ENCODE measurements at regions of chr2 and their contacts with region 1.

Region 1: DNA sequence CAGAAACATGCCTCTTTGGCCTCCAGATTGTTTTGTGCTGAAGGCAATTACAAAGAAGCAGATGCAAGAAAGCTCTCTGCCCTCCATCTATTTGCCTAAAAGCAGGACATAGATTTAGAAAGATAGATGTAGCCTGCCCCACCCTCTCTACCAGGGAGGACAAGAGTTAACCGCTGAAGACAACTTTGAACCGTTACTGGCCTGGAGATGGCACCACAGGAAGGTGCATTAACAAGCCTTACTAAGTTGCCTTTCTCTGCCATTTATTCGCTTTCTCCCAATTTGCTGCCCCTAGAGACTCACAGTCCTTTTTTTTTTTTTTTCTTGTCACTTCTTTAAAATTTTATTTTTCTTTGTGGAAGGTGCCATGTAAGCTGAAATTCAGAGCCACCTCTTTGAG is 28.8 kb upstream of the RMDN2 start:
- DNase-seq: peak in 1 of 4 experiments; percentile 18
- ATAC-seq: peak; percentile 57; the same call in 2 of the 3 replicates
- H3K4me3 ChIP-seq: no peak overlapping the region
- H3K27ac ChIP-seq: no peak overlapping the region
- H3K4me1 ChIP-seq: no peaks in the 10 kb centered on the region
- H3K27me3 ChIP-seq: peaks cover 2 to 12% of the 10 kb centered on the region in 2 experiments; a peak in 2 of 5 replicates
- CTCF ChIP-seq: peak; percentile 9 to 40 (median 25); a peak in 2 of 6 replicates
- EP300 ChIP-seq: no peak
- POLR2A ChIP-seq: no peak
- RAD21 ChIP-seq: peak in 1 of 2 experiments; percentile 64; a peak in 2 of 4 replicates

Region 2: DNA sequence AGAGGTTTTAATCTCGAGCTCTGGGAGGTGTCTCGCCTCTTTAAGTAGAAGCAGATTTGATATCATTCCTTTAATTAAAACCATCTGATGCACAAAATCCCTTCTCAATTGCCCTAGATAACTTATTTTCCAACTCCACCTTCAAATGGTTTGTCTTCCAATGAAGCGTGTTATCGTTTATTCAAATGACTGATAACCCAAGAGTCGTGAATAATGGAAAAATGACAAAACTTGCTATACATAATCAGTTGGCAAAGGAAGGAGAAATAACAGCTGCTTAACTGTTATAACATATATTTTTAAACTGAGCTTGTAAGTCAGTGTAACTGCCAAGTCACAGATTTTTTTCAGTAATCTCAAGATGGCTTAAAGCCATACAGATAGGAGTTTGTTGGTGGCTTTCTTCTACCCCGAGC is 407.3 kb before region 1 on chr2:
- CTCF ChIA-PET with region 1: no interaction called
- POLR2A ChIA-PET with region 1: no interaction called
- in situ Hi-C with region 1: no loop called
- intact Hi-C with region 1: no loop called
- DNase-seq: no peak
- ATAC-seq: no peak
- H3K4me3 ChIP-seq: no peak overlapping the region
- H3K27ac ChIP-seq: no peak overlapping the region
- H3K4me1 ChIP-seq: no peaks in the 10 kb centered on the region
- H3K27me3 ChIP-seq: no peaks in the 10 kb centered on the region
- CTCF ChIP-seq: no peak
- EP300 ChIP-seq: no peak
- POLR2A ChIP-seq: no peak
- RAD21 ChIP-seq: no peak

Region 3: GRCh38 chr2:37912616-37913015 is 16.3 kb after region 1 on chr2:
- CTCF ChIA-PET with region 1: no interaction called
- POLR2A ChIA-PET with region 1: no interaction called
- in situ Hi-C with region 1: no loop called
- intact Hi-C with region 1: no loop called
- DNase-seq: no peak
- ATAC-seq: no peak
- H3K4me3 ChIP-seq: no peak overlapping the region
- H3K27ac ChIP-seq: no peak overlapping the region
- H3K4me1 ChIP-seq: no peaks in the 10 kb centered on the region
- H3K27me3 ChIP-seq: peaks cover 2 to 5% of the 10 kb centered on the region in 2 experiments; a peak in 3 of 5 replicates
- CTCF ChIP-seq: no peak
- EP300 ChIP-seq: no peak
- POLR2A ChIP-seq: no peak
- RAD21 ChIP-seq: no peak

Region 4: GRCh38 chr2:37973615-37974353 is 77.5 kb after region 1 on chr2:
- CTCF ChIA-PET with region 1: no interaction called
- POLR2A ChIA-PET with region 1: no interaction called
- in situ Hi-C with region 1: no loop called
- intact Hi-C with region 1: loop called (anchors 5 kb)
- DNase-seq: no peak
- ATAC-seq: no peak
- H3K4me3 ChIP-seq: no peak overlapping the region
- H3K27ac ChIP-seq: no peak overlapping the region
- H3K4me1 ChIP-seq: no peaks in the 10 kb centered on the region
- H3K27me3 ChIP-seq: no peaks in the 10 kb centered on the region; a peak in 2 of 5 replicates
- CTCF ChIP-seq: no peak
- EP300 ChIP-seq: no peak
- POLR2A ChIP-seq: no peak
- RAD21 ChIP-seq: no peak

Region 5: GRCh38 chr2:38115216-38116032 is 219.1 kb after region 1 on chr2:
- CTCF ChIA-PET with region 1: no interaction called
- POLR2A ChIA-PET with region 1: no interaction called
- in situ Hi-C with region 1: no loop called
- intact Hi-C with region 1: loop called (anchors 5 kb)
- DNase-seq: peak; percentile 76 to 81 (median 78)
- ATAC-seq: peak; percentile 92
- H3K4me3 ChIP-seq: no peak overlapping the region
- H3K27ac ChIP-seq: no peak overlapping the region
- H3K4me1 ChIP-seq: no peaks in the 10 kb centered on the region
- H3K27me3 ChIP-seq: peaks cover 2 to 11% of the 10 kb centered on the region in 2 experiments; a peak in 3 of 5 replicates
- CTCF ChIP-seq: peak; percentile 86 to 93 (median 89)
- EP300 ChIP-seq: no peak
- POLR2A ChIP-seq: no peak
- RAD21 ChIP-seq: peak; percentile 90